Activated CD4-positive, alpha-beta memory T cell treated with anti-CD3 and anti-CD28 coated beads, Interleukin-2, amount 10 ng/mL, durations not matched to agents 7 days and 5 days (primary cell): ENCODE measurements at regions of chr16 and their contacts with region 1.

Region 1: GRCh38 chr16:17416461-17417311 is 54.1 kb downstream of the XYLT1 start:
- DNase-seq: peak; percentile 58
- H3K4me3 Mint-ChIP-seq: peak overlapping the region; percentile 40
- H3K27ac Mint-ChIP-seq: peak overlapping the region; percentile 86
- H3K4me1 Mint-ChIP-seq: peaks cover 48% of the 10 kb centered on the region
- H3K27me3 Mint-ChIP-seq: no peaks in the 10 kb centered on the region

Region 2: GRCh38 chr16:17448640-17449638 is 32.3 kb after region 1 on chr16:
- CTCF ChIA-PET with region 1: no interaction called
- POLR2A ChIA-PET with region 1: interaction called, 13 read pairs
- DNase-seq: peak; percentile 71
- H3K4me3 Mint-ChIP-seq: peak overlapping the region; percentile 45
- H3K27ac Mint-ChIP-seq: peak overlapping the region; percentile 98
- H3K4me1 Mint-ChIP-seq: peaks cover 62% of the 10 kb centered on the region
- H3K27me3 Mint-ChIP-seq: no peaks in the 10 kb centered on the region

Region 3: GRCh38 chr16:17467923-17468540 is 51.3 kb after region 1 on chr16:
- CTCF ChIA-PET with region 1: interaction called, 16 read pairs
- POLR2A ChIA-PET with region 1: interaction called, 8 read pairs
- DNase-seq: peak; percentile 52
- H3K4me3 Mint-ChIP-seq: peak overlapping the region; percentile 77
- H3K27ac Mint-ChIP-seq: no peak overlapping the region
- H3K4me1 Mint-ChIP-seq: peaks cover 55% of the 10 kb centered on the region
- H3K27me3 Mint-ChIP-seq: no peaks in the 10 kb centered on the region

Region 4: GRCh38 chr16:17511340-17511739 is 94.7 kb after region 1 on chr16:
- CTCF ChIA-PET with region 1: no interaction called
- POLR2A ChIA-PET with region 1: no interaction called
- DNase-seq: no peak
- H3K4me3 Mint-ChIP-seq: no peak overlapping the region
- H3K27ac Mint-ChIP-seq: no peak overlapping the region
- H3K4me1 Mint-ChIP-seq: no peaks in the 10 kb centered on the region
- H3K27me3 Mint-ChIP-seq: peaks cover 23% of the 10 kb centered on the region